Motor neuron (in vitro differentiated cells): ENCODE measurements at regions of chr16 and their contacts with region 1.

Region 1: GRCh38 chr16:21989133-21989532 is 11.8 kb downstream of the PDZD9 start:
- ATAC-seq: peak in 2 of 8 experiments; percentile 40 to 52
- H3K4me3 ChIP-seq: no peak overlapping the region
- H3K27ac ChIP-seq: no peak overlapping the region
- H3K4me1 ChIP-seq: no peaks in the 10 kb centered on the region

Region 2: DNA sequence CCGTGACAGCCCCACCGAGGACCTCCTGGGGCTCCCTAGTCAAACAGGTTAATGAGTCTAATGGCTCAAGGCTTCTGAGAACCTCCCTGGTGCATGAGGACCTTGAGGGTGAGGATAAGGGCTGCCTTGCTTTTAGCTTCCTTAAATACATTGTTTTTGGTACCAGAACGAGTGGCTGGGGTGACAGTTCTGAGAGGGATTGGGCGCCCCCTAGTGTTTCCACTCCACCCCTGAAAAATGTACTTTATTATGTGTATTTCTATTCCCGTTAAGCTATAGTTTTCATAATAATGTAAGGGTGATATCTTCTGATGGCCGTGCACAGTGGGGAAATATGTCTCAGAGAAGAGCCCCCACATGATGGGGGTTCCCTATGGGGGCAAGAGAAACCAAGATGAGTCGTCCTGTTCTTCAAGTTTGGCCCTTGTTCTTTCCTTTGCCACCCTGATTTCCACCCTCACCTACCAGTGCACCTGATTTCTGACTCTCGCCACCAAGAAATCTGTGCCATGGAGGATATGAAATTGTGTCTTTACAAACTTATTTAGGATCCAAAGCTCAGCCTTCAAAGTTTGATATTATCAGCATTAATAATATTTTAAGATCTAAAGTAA is 88.7 kb after region 1 on chr16:
- in situ Hi-C with region 1: loop called in 1 of 9 experiments (anchors 25 kb)
- ATAC-seq: peak in 5 of 8 experiments; percentile 25 to 90 (median 66)
- H3K4me3 ChIP-seq: no peak overlapping the region
- H3K27ac ChIP-seq: no peak overlapping the region
- H3K4me1 ChIP-seq: no peaks in the 10 kb centered on the region

Region 3: DNA sequence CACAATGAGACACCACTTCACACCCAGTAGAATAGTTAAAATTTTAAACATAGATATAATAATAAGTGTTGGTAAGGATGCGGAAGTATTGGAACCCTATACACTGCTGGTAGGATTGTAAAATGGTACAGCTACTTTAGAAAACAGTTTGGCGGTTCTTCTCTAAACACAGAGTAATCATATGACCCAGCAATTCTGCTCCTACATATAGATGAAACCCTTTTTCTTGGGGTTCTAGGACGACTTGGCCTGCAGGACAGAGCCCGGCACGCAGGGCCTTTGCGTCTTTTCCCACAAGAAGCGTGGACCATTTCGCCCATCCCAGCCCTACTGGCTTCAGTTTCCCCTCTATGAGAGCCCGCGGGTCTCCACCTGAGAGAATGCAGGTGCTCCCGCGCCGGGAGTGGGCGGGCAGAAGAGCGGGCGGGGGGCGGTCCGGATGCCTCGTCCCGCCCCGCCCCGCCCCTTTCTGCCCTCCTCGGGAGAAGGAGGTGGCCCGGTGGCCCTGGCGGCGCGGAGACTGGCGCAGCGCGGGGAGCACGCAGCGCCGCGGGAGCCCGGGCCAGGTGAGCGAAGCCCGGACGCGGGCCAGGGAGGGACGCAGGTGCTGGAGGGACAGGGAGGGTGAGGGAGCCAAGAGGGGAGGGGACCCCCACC is 173.0 kb after region 1 on chr16 and contains the start of gene SDR42E2:
- in situ Hi-C with region 1: no loop called
- ATAC-seq: peak in 1 of 8 experiments; percentile 59
- H3K4me3 ChIP-seq: no peak within 1 kb of the TSS
- H3K27ac ChIP-seq: no peak within 1 kb of the TSS
- H3K4me1 ChIP-seq: no peaks in the 10 kb centered on the region
- total RNA-seq, gene SDR42E2: 0.05 to 0.81 (median 0.17) TPM

Region 4: DNA sequence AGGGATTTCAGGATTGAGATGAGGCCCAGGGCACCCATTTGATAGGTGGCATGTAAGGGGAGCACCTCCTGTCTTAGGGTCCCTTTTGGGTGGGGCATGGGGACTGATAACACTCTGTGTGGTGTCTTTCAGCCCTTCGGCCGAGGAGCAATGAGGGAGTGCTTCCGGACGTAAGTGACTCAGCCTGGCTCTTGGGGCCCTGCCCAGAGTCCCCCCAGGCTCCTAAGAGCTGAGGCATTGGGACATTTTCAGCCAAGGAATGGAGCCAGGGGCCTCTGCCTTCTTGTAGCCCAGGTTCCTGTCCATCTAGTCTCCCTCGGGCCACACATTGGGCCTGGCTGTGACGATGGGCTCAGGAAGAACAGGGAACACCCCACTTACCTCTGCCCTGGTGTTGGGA is 261.4 kb after region 1 on chr16:
- in situ Hi-C with region 1: no loop called
- ATAC-seq: no peak
- H3K4me3 ChIP-seq: no peak overlapping the region
- H3K27ac ChIP-seq: no peak overlapping the region
- H3K4me1 ChIP-seq: no peaks in the 10 kb centered on the region